Activated CD8-positive, alpha-beta T cell treated with anti-CD3 and anti-CD28 coated beads for 36 hours (primary cell): ENCODE measurements at regions of chr14 and their contacts with region 1.

Region 1: DNA sequence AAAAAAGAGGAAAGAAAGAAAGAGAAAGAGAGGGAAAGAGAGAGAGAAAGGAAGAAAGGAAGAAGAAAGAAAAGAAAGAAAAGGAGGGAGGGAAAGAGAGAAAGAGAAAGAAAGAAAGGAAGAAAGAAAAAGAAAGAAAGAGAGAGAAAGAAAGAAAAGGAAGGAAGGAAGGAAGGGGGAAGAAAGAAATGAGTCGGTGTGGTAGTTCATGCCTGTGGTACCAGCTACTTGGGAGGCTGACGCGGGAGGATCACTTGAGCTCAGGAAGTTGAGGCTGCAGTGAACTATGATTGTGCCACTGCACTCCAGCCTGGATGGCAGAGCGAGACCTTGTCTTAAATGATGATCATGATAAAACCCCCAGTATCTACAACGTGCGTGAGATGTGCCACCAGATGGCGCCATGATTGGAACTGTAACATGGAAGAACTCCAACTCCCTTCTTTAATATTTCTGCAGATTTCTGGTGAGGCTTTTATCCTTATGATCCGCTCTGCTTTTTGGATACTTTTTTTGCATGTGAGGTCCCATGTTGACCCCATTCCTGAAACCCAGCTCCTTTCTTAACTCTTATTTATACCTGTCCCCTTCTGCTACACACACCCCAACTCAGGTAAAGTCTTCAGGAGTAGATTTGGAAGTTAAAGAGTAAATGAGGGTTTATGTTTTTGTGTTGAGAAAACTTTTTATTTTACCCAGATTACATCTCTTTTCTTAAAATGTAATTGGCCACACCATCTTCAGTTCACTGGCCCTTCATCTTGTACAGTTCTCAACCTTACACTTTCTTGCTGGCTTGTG is 25.6 kb downstream of the RNASE10 start:
- DNase-seq: peak; percentile 90
- ATAC-seq: peak; percentile 88
- H3K4me3 Mint-ChIP-seq: peak overlapping the region; percentile 40
- H3K27ac Mint-ChIP-seq: no peak overlapping the region
- H3K4me1 Mint-ChIP-seq: peaks cover 7% of the 10 kb centered on the region
- H3K27me3 Mint-ChIP-seq: peaks cover 2% of the 10 kb centered on the region
- CTCF ChIP-seq: peak; percentile 80

Region 2: DNA sequence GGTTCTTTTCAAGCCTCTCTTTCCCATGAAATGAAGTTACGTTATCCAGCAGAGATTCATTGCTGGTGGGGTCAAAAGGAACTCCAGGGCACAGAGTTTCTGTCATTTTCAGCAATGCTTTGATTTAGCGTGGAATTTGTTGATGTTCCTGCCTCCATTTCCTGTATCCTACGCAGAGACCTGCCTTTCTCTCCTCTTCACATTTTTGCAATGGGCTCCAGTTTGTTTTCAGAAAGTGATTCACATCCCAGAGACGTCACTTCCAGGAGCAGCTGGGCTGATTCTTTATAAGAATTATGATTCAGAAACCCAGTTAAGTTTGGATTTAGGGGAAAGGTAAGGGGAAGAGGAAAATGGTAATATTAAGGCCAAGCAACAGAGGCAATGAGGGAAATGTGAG is 14.1 kb before region 1 on chr14:
- CTCF ChIA-PET with region 1: interaction called, 28 read pairs
- POLR2A ChIA-PET with region 1: no interaction called
- intact Hi-C with region 1: no loop called
- DNase-seq: no peak
- ATAC-seq: no peak
- H3K4me3 Mint-ChIP-seq: no peak overlapping the region
- H3K27ac Mint-ChIP-seq: no peak overlapping the region
- H3K4me1 Mint-ChIP-seq: no peaks in the 10 kb centered on the region
- H3K27me3 Mint-ChIP-seq: no peaks in the 10 kb centered on the region
- CTCF ChIP-seq: no peak

Region 3: DNA sequence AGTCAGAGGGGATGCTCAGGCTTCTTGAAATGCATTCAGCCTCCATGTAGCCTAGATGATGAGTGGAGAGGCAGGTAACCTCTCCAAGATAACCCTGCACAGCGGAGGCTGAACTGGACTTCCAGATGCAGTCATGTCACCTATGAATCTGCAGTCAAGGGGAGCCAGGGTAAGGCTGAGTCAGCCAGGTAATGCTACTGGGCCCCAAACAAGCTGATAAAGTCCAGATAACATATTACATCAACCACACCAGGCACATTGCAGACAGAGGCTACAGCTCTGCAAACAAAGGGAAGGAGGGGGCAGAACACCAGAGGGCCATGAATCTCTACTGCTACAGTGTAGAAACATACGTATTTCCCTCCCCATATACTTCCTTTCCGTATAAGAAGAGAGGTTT is 15.9 kb after region 1 on chr14:
- CTCF ChIA-PET with region 1: interaction called, 15 read pairs
- POLR2A ChIA-PET with region 1: no interaction called
- intact Hi-C with region 1: no loop called
- DNase-seq: no peak
- ATAC-seq: no peak
- H3K4me3 Mint-ChIP-seq: no peak overlapping the region
- H3K27ac Mint-ChIP-seq: no peak overlapping the region
- H3K4me1 Mint-ChIP-seq: no peaks in the 10 kb centered on the region
- H3K27me3 Mint-ChIP-seq: peaks cover 4% of the 10 kb centered on the region
- CTCF ChIP-seq: no peak

Region 4: GRCh38 chr14:21039585-21040369 is 508.8 kb after region 1 on chr14:
- CTCF ChIA-PET with region 1: no interaction called
- POLR2A ChIA-PET with region 1: no interaction called
- intact Hi-C with region 1: no loop called
- DNase-seq: peak; percentile 26
- ATAC-seq: peak; percentile 86
- H3K4me3 Mint-ChIP-seq: no peak overlapping the region
- H3K27ac Mint-ChIP-seq: no peak overlapping the region
- H3K4me1 Mint-ChIP-seq: peaks cover 4% of the 10 kb centered on the region
- H3K27me3 Mint-ChIP-seq: peaks cover 3% of the 10 kb centered on the region
- CTCF ChIP-seq: peak; percentile 50